SK-N-SH (cell line): ENCODE measurements at regions of chr6 and their contacts with region 1.

Region 1: DNA sequence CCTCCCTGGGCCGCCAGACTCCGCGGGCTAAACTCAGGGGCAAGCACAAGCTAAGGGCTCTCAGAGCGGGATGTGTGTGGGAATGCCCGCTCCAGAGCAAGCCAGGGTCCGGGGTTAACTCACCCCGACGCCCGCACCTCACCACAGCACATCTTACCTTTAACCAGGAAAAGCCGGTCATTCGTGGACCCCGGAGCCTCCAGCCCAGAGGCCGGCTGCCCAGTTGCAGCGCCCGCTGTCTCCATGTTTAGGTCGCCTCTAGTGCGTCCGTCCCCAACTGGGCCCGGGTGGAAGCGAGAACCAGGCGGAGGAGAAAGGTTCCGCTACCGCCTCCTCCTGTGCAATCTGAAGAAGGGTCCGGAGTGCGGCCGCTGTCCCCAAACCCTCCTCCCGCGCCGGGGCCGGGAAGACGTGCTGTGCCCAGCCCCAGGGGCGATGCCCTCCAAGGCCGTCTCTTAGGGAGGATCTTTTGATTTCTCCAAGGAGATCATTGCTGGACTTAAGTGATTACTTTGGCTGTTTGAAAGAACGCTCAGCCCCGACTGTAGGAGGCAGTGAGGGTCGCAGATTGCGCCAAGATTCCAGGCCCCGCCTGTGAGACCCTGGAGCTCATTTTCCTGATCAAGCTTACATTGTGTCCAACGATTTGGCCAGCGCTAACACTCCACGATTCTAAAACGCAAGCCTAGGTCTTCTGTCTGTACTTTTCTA is at the start of gene TMEM242:
- DNase-seq: peak; percentile 89
- H3K4me3 ChIP-seq: peak within 1 kb of the TSS; percentile 79 to 89
- H3K27ac ChIP-seq: peak within 1 kb of the TSS; percentile 89 to 94
- H3K4me1 ChIP-seq: peaks cover 7 to 11% of the 10 kb centered on the region in 2 experiments; a peak in 3 of 4 replicates
- H3K27me3 ChIP-seq: no peaks in the 10 kb centered on the region
- CTCF ChIP-seq: no peak
- EP300 ChIP-seq: peak in 1 of 2 experiments; percentile 66; a peak in 1 of 4 replicates
- RAD21 ChIP-seq: no peak; the same call in 1 of the 2 replicates
- polyA plus RNA-seq, gene TMEM242: 7.4 and 8.3 TPM in 2 replicates

Region 2: GRCh38 chr6:157335829-157336228 is 12.4 kb after region 1 on chr6:
- CTCF ChIA-PET with region 1: interaction called, 20 read pairs
- POLR2A ChIA-PET with region 1: no interaction called
- DNase-seq: no peak
- H3K4me3 ChIP-seq: no peak overlapping the region
- H3K27ac ChIP-seq: no peak overlapping the region
- H3K4me1 ChIP-seq: peaks cover 0 to 2% of the 10 kb centered on the region in 2 experiments; a peak in 1 of 4 replicates
- H3K27me3 ChIP-seq: no peaks in the 10 kb centered on the region
- CTCF ChIP-seq: no peak
- EP300 ChIP-seq: no peak
- RAD21 ChIP-seq: no peak

Region 3: GRCh38 chr6:157379656-157380454 is 56.4 kb after region 1 on chr6:
- CTCF ChIA-PET with region 1: interaction called, 5 read pairs
- POLR2A ChIA-PET with region 1: interaction called, 19 read pairs
- DNase-seq: peak; percentile 90
- H3K4me3 ChIP-seq: peak overlapping the region; percentile 92 to 97
- H3K27ac ChIP-seq: peak overlapping the region; percentile 76 to 94
- H3K4me1 ChIP-seq: peaks cover 0 to 11% of the 10 kb centered on the region in 2 experiments; a peak in 2 of 4 replicates
- H3K27me3 ChIP-seq: no peaks in the 10 kb centered on the region
- CTCF ChIP-seq: no peak
- EP300 ChIP-seq: no peak; a peak in 1 of 4 replicates
- RAD21 ChIP-seq: no peak

Region 4: GRCh38 chr6:157597446-157598312 is 274.3 kb after region 1 on chr6:
- CTCF ChIA-PET with region 1: interaction called, 20 read pairs
- POLR2A ChIA-PET with region 1: no interaction called
- DNase-seq: peak; percentile 75
- H3K4me3 ChIP-seq: no peak overlapping the region
- H3K27ac ChIP-seq: no peak overlapping the region
- H3K4me1 ChIP-seq: no peaks in the 10 kb centered on the region; a peak in 1 of 4 replicates
- H3K27me3 ChIP-seq: no peaks in the 10 kb centered on the region
- CTCF ChIP-seq: peak; percentile 55
- EP300 ChIP-seq: no peak
- RAD21 ChIP-seq: peak; percentile 80